Psoas muscle (tissue), 8 donors: ENCODE measurements at regions of chr11 and their contacts with region 1.

Region 1: GRCh38 chr11:36265793-36266628 is 23.2 kb downstream of the COMMD9 start:
- DNase-seq: peak; percentile 42 to 74
- ATAC-seq: peak; percentile 56 to 89 (median 77)
- H3K4me3 ChIP-seq: no peak overlapping the region
- H3K27ac ChIP-seq: no peak overlapping the region
- H3K4me1 ChIP-seq: no peaks in the 10 kb centered on the region
- H3K27me3 ChIP-seq: no peaks in the 10 kb centered on the region
- CTCF ChIP-seq: peak; percentile 79

Region 2: DNA sequence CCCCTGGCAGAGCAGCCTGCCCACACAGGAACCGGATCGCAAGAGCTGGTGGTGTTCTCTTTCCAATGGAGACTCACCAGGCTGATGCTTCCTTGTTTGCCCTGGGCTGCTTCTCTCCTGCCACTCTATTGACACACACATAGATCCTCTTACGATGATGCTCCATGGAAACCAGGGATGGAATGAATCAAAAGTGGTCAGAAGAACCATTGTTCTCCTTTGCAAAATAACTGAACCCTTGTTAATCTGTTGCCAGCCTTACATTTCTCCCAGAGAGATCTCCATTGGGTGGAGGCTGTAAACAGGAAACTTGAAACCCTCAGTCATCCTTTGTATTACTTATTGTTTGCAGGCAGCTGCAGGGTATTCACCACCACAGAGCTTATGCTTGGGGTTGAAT is 346.8 kb before region 1 on chr11:
- intact Hi-C with region 1: no loop called
- DNase-seq: no peak
- ATAC-seq: peak; percentile 17 to 62 (median 30)
- H3K4me3 ChIP-seq: no peak overlapping the region
- H3K27ac ChIP-seq: no peak overlapping the region
- H3K4me1 ChIP-seq: peaks cover 29% of the 10 kb centered on the region
- H3K27me3 ChIP-seq: no peaks in the 10 kb centered on the region
- CTCF ChIP-seq: no peak

Region 3: DNA sequence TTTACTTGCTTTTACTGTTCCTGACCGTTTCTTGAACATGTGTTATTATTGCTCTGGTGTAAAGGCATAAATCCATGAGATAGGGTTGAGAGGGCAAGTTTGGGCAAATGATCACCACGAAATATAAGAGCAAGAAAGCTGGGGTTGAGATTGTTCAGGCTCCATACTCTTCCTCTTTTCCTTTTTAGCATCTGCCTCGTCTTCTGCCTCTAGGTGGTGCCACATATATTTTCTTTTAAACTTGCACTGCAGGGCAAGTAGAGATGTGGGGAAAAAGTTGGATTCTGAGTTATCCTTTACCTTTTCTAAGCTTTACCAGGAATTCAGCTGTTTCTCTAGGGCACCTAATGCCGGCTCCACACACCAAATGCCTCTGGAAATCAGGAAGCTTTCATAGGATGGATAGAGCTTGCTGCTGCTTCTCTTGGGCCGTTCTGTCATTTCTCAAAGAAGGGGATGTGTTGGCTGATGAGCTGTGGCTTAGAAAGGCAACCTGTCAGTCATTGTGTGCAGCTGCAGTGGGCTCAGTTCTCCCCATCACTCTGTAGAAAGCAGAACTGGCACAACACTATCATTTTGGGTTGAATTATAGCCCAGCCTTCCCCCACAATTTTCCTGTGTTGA is 223.9 kb before region 1 on chr11:
- intact Hi-C with region 1: loop called in 1 of 2 experiments (anchors 5 kb)
- DNase-seq: no peak
- ATAC-seq: no peak
- H3K4me3 ChIP-seq: no peak overlapping the region
- H3K27ac ChIP-seq: no peak overlapping the region
- H3K4me1 ChIP-seq: peaks cover 5% of the 10 kb centered on the region
- H3K27me3 ChIP-seq: no peaks in the 10 kb centered on the region
- CTCF ChIP-seq: peak; percentile 47

Region 4: GRCh38 chr11:36162883-36163434 is 103.1 kb before region 1 on chr11:
- intact Hi-C with region 1: no loop called
- DNase-seq: no peak
- ATAC-seq: no peak
- H3K4me3 ChIP-seq: no peak overlapping the region
- H3K27ac ChIP-seq: no peak overlapping the region
- H3K4me1 ChIP-seq: peaks cover 19% of the 10 kb centered on the region
- H3K27me3 ChIP-seq: peaks cover 0 to 1% (median 0%) of the 10 kb centered on the region in 3 donors
- CTCF ChIP-seq: no peak